Mammary epithelial cell (primary cell): ENCODE measurements at regions of chr17 and their contacts with region 1.

Region 1: GRCh38 chr17:37373530-37374159 is 2.1 kb upstream of the C17orf78 start:
- DNase-seq: peak; percentile 78
- H3K4me3 ChIP-seq: no peak overlapping the region
- H3K27ac ChIP-seq: no peak overlapping the region
- H3K4me1 ChIP-seq: peaks cover 6% of the 10 kb centered on the region
- H3K27me3 ChIP-seq: no peaks in the 10 kb centered on the region
- CTCF ChIP-seq: peak; percentile 100

Region 2: GRCh38 chr17:36629252-36629847 is 744.3 kb before region 1 on chr17:
- CTCF ChIA-PET with region 1: no interaction called
- dilution Hi-C with region 1: no loop called
- in situ Hi-C with region 1: loop called in 1 of 2 experiments (anchors 25 kb)
- intact Hi-C with region 1: loop called (anchors 5 kb)
- DNase-seq: peak; percentile 37
- H3K4me3 ChIP-seq: no peak overlapping the region
- H3K27ac ChIP-seq: no peak overlapping the region
- H3K4me1 ChIP-seq: no peaks in the 10 kb centered on the region
- H3K27me3 ChIP-seq: no peaks in the 10 kb centered on the region
- CTCF ChIP-seq: peak; percentile 97 to 98

Region 3: DNA sequence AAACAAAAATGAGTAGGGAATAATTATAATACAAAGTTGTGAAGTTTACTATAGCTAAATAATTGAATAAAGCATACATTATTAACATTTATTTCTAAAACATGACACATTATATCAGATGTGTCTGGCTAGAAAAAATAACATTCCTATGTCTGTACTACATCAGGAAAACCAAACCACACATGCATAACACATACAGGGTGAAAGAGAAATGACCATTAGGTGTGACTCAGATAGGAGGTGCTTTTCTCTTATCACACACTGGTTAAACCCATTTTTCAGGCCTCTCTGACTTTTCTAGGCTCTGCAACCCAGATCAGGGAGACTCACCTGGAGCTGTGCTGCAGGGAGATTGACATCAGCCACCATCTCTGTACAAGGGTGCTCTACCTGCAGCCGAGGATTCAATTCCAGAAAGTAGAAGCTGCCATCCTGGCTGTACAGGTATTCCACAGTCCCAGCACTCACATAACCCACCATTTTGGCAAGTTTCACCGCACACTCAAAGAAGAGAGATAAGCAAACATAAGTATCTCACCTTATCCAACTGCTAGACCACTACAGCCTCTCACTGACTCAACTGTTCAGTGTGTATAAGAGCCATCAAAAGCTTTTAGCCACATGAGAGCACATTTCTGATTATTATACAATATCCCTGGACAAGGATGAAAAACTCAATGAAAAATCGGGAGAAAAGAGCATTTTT is 114.5 kb before region 1 on chr17:
- CTCF ChIA-PET with region 1: no interaction called
- dilution Hi-C with region 1: no loop called
- in situ Hi-C with region 1: no loop called
- intact Hi-C with region 1: loop called (anchors 2 kb)
- DNase-seq: peak; percentile 81
- H3K4me3 ChIP-seq: no peak overlapping the region
- H3K27ac ChIP-seq: no peak overlapping the region
- H3K4me1 ChIP-seq: peaks cover 10% of the 10 kb centered on the region
- H3K27me3 ChIP-seq: no peaks in the 10 kb centered on the region
- CTCF ChIP-seq: no peak

Region 4: DNA sequence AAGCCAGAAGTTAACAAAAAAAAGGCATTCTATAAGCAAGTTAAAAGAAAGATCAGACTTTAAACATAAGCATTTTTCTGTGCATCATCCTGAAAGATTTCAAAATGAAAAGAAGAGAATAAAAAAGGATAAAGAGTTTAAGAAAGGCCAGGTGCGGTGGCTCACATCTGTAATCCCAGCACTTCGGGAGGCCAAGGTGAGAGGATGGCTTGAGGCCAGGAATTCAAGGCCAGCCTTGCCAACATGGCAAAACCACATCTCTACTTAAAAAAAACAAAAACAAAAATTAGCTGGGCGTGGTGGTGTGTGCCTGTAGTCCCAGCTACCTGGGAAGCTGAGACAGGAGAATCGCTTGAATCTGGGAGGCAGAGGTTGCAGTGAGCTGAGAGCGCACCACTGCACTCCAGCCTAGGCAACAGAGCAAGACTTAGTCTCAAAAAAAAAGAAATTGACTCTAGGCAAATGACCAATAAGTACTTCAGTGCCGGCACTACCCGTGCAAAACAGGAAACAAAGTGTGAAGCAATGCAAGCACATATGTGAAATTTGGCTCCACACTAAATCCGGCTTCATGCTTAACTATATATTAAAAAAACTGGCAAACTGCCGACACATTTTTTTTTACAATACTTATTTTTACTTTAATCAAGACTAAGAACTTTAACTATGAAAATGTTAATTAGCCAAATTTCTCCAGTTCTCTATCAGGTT is 81.1 kb before region 1 on chr17:
- CTCF ChIA-PET with region 1: no interaction called
- dilution Hi-C with region 1: no loop called
- in situ Hi-C with region 1: no loop called
- intact Hi-C with region 1: no loop called
- DNase-seq: no peak
- H3K4me3 ChIP-seq: no peak overlapping the region
- H3K27ac ChIP-seq: no peak overlapping the region
- H3K4me1 ChIP-seq: no peaks in the 10 kb centered on the region
- H3K27me3 ChIP-seq: no peaks in the 10 kb centered on the region
- CTCF ChIP-seq: no peak

Region 5: GRCh38 chr17:37392024-37392590 is 18.5 kb after region 1 on chr17:
- CTCF ChIA-PET with region 1: no interaction called
- dilution Hi-C with region 1: no loop called
- in situ Hi-C with region 1: no loop called
- intact Hi-C with region 1: loop called (anchors 1 kb)
- DNase-seq: peak; percentile 44
- H3K4me3 ChIP-seq: peak overlapping the region in 1 of 3 experiments; percentile 23
- H3K27ac ChIP-seq: no peak overlapping the region
- H3K4me1 ChIP-seq: no peaks in the 10 kb centered on the region
- H3K27me3 ChIP-seq: no peaks in the 10 kb centered on the region
- CTCF ChIP-seq: no peak

Region 6: DNA sequence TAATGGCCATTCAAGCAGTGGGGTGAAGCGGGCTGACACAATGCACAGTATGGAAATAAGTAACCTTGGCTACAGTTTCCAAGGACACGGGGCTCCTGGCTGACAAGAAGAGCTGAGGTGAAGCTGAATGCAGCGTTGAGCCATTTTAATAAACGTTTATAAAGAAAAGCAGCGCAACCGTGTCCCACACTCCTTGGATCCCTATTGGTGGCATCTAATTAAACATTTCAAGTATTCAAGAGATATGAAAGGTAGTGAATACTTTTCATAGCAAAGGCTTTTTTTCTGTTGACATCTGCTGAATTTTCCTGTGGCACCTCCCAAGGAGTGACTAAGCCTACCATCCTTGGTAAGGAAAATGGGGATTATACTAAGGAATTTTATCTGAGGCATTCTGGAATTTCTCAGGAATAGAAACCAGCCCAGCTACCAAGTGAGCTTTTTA is 142.5 kb after region 1 on chr17:
- CTCF ChIA-PET with region 1: no interaction called
- dilution Hi-C with region 1: no loop called
- in situ Hi-C with region 1: loop called in 1 of 2 experiments (anchors 25 kb)
- intact Hi-C with region 1: loop called (anchors 2 kb)
- DNase-seq: no peak
- H3K4me3 ChIP-seq: no peak overlapping the region
- H3K27ac ChIP-seq: no peak overlapping the region
- H3K4me1 ChIP-seq: no peaks in the 10 kb centered on the region
- H3K27me3 ChIP-seq: no peaks in the 10 kb centered on the region
- CTCF ChIP-seq: no peak

Region 7: DNA sequence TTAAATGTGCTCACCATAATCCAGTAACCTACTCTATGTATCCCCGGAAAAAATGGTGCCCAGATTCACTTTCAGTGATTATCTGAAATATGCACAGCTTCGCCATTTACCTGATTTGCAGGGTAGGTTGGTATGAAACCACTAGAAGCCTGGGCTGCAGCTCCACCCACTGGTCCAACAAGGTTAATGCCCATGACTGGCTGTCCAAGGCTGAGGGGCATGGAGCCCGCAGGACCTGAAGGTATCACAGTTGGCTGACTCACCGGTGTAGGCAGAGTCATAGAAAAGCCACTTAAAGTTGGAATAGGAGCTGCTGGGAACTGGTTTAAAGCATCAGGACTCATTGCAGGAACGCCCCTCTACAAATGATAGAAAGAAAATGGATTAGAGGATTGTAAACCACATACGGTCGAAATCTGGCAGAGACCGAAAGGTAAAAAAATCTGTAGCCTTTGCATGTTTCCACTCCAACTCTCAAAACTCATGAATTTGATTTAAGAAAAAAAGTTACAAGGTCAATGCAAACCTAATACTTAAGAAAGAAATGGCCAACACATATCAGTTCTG is 197.0 kb after region 1 on chr17:
- CTCF ChIA-PET with region 1: interaction called, 8 read pairs
- dilution Hi-C with region 1: no loop called
- in situ Hi-C with region 1: no loop called
- intact Hi-C with region 1: loop called (anchors 1 kb)
- DNase-seq: peak; percentile 89
- H3K4me3 ChIP-seq: no peak overlapping the region
- H3K27ac ChIP-seq: no peak overlapping the region
- H3K4me1 ChIP-seq: peaks cover 2% of the 10 kb centered on the region
- H3K27me3 ChIP-seq: no peaks in the 10 kb centered on the region
- CTCF ChIP-seq: peak; percentile 80 to 81